ENCODE measurements at regions of chr2 and their contacts with region 1.

Region 1: DNA sequence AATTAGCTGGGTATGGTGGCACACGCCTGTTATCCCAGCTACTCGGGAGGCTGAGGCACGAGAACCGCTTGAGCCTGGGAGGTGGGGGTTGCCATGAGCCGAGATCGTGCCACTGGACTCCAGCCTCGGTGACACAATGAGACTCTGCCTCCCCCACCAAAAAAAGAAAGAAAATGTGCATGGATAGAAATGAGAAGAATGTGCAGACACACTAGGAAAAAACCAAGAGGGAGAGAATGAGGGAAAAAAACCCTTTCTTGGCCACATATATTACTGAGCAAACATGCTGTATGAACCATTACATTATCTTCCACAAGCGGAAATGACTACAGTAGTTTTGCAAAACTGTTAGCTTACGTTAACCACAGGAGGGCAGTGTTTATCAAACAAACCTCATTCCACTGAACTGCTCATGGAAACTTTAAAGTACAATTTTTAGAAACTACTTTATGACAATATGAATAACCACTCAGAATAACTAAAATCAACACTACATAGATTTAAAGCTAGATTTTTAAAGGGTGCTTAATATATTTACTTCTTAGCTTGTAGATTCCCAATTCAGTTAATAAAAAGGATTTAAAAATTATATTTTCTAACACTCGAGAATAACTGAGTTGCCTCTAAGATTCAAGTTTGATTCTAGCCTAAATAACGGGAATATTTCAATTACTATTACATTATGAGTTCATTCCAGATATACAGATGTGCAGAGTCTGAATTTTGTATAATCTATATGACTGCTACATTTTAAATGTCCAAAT is 26.4 kb downstream of the ASXL2 start:
- DNase-seq: peak; percentile 57
- ATAC-seq: peak; percentile 99
- H3K4me3 ChIP-seq: no peak overlapping the region
- H3K27ac ChIP-seq: no peak overlapping the region
- H3K4me1 ChIP-seq: peaks cover 9% of the 10 kb centered on the region
- H3K27me3 ChIP-seq: no peaks in the 10 kb centered on the region
- CTCF ChIP-seq: peak; percentile 46 to 79 (median 70); a peak in 5 of 6 replicates
- EP300 ChIP-seq: peak in 1 of 2 experiments; percentile 60; a peak in 2 of 4 replicates
- POLR2A ChIP-seq: no peak
- RAD21 ChIP-seq: peak; percentile 69

Region 2: DNA sequence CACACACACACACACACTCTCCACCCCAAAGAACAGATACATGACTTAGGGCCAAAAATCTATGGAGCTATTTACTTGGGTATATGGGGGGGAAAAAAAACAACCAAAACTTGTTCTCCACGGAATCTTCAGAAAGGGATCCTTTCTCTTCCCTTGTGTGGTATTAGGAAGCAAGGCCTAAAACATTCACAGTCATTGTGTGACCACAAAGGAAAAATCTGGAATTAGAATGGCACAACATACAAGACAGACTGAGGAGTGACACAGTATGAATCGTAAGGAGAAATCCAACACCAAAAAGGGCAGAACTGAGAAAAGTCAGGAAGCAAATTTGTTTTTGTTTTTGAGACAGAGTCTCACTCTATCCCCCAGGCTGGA is 43.9 kb before region 1 on chr2:
- CTCF ChIA-PET with region 1: interaction called, 10 read pairs
- POLR2A ChIA-PET with region 1: no interaction called
- RAD21 ChIA-PET with region 1: no interaction called
- SMC1A ChIA-PET with region 1: interaction called, 5 read pairs
- in situ Hi-C with region 1: no loop called
- intact Hi-C with region 1: no loop called
- DNase-seq: no peak
- ATAC-seq: no peak
- H3K4me3 ChIP-seq: no peak overlapping the region
- H3K27ac ChIP-seq: no peak overlapping the region
- H3K4me1 ChIP-seq: no peaks in the 10 kb centered on the region
- H3K27me3 ChIP-seq: no peaks in the 10 kb centered on the region
- CTCF ChIP-seq: no peak
- EP300 ChIP-seq: no peak
- POLR2A ChIP-seq: no peak
- RAD21 ChIP-seq: no peak

Region 3: GRCh38 chr2:25831746-25832449 is 20.0 kb before region 1 on chr2:
- CTCF ChIA-PET with region 1: interaction called, 24 read pairs
- POLR2A ChIA-PET with region 1: interaction called, 3 read pairs
- RAD21 ChIA-PET with region 1: no interaction called
- SMC1A ChIA-PET with region 1: interaction called, 22 read pairs
- in situ Hi-C with region 1: no loop called
- intact Hi-C with region 1: no loop called
- DNase-seq: no peak
- ATAC-seq: peak; percentile 46; the same call in 2 of the 3 replicates
- H3K4me3 ChIP-seq: no peak overlapping the region
- H3K27ac ChIP-seq: no peak overlapping the region
- H3K4me1 ChIP-seq: no peaks in the 10 kb centered on the region
- H3K27me3 ChIP-seq: no peaks in the 10 kb centered on the region
- CTCF ChIP-seq: no peak
- EP300 ChIP-seq: no peak
- POLR2A ChIP-seq: no peak
- RAD21 ChIP-seq: no peak

Region 4: GRCh38 chr2:25867396-25868003 is 15.6 kb after region 1 on chr2:
- CTCF ChIA-PET with region 1: interaction called, 97 read pairs
- POLR2A ChIA-PET with region 1: interaction called, 4 read pairs
- RAD21 ChIA-PET with region 1: interaction called, 17 read pairs
- SMC1A ChIA-PET with region 1: interaction called, 48 read pairs
- in situ Hi-C with region 1: no loop called
- intact Hi-C with region 1: no loop called
- DNase-seq: no peak
- ATAC-seq: no peak
- H3K4me3 ChIP-seq: no peak overlapping the region
- H3K27ac ChIP-seq: no peak overlapping the region
- H3K4me1 ChIP-seq: no peaks in the 10 kb centered on the region
- H3K27me3 ChIP-seq: no peaks in the 10 kb centered on the region
- CTCF ChIP-seq: no peak
- EP300 ChIP-seq: no peak
- POLR2A ChIP-seq: no peak
- RAD21 ChIP-seq: no peak

Region 5: GRCh38 chr2:25951071-25951547 is 99.2 kb after region 1 on chr2:
- CTCF ChIA-PET with region 1: interaction called, 58 read pairs
- POLR2A ChIA-PET with region 1: no interaction called
- RAD21 ChIA-PET with region 1: interaction called, 8 read pairs
- SMC1A ChIA-PET with region 1: interaction called, 22 read pairs
- in situ Hi-C with region 1: no loop called
- intact Hi-C with region 1: loop called (anchors 2 kb)
- DNase-seq: peak; percentile 24
- ATAC-seq: peak; percentile 99
- H3K4me3 ChIP-seq: no peak overlapping the region
- H3K27ac ChIP-seq: no peak overlapping the region
- H3K4me1 ChIP-seq: no peaks in the 10 kb centered on the region
- H3K27me3 ChIP-seq: no peaks in the 10 kb centered on the region
- CTCF ChIP-seq: peak; percentile 95 to 96 (median 95)
- EP300 ChIP-seq: no peak
- POLR2A ChIP-seq: no peak
- RAD21 ChIP-seq: peak; percentile 93

Region 6: GRCh38 chr2:26144953-26145680 is 293.2 kb after region 1 on chr2:
- CTCF ChIA-PET with region 1: interaction called, 29 read pairs
- POLR2A ChIA-PET with region 1: no interaction called
- RAD21 ChIA-PET with region 1: interaction called, 3 read pairs
- SMC1A ChIA-PET with region 1: interaction called, 5 read pairs
- in situ Hi-C with region 1: loop called (anchors 10 kb)
- intact Hi-C with region 1: loop called (anchors 5 kb)
- DNase-seq: peak; percentile 23
- ATAC-seq: peak; percentile 87
- H3K4me3 ChIP-seq: no peak overlapping the region
- H3K27ac ChIP-seq: no peak overlapping the region
- H3K4me1 ChIP-seq: no peaks in the 10 kb centered on the region
- H3K27me3 ChIP-seq: no peaks in the 10 kb centered on the region
- CTCF ChIP-seq: peak; percentile 66 to 86 (median 79)
- EP300 ChIP-seq: no peak
- POLR2A ChIP-seq: no peak
- RAD21 ChIP-seq: peak; percentile 95